Sigmoid colon (tissue), 7 donors: ENCODE measurements at regions of chr6 and their contacts with region 1.

Region 1: GRCh38 chr6:35240840-35241801 is 18.4 kb upstream of the ZNF76 start:
- DNase-seq: peak; percentile 82
- H3K4me3 ChIP-seq: no peak overlapping the region
- H3K27ac ChIP-seq: peak overlapping the region in 1 of 4 donors; percentile 14
- H3K4me1 ChIP-seq: peaks cover 0 to 39% (median 34%) of the 10 kb centered on the region in 4 donors
- H3K27me3 ChIP-seq: no peaks in the 10 kb centered on the region
- CTCF ChIP-seq: peak; percentile 84 to 97 (median 93)
- EP300 ChIP-seq: no peak
- POLR2A ChIP-seq: no peak

Region 2: GRCh38 chr6:34986845-34987246 is 254.3 kb before region 1 on chr6:
- intact Hi-C with region 1: loop called (anchors 5 kb)
- DNase-seq: peak; percentile 83
- H3K4me3 ChIP-seq: no peak overlapping the region
- H3K27ac ChIP-seq: peak overlapping the region in 3 of 4 donors; percentile 7 to 36 (median 16)
- H3K4me1 ChIP-seq: peaks cover 0 to 28% (median 16%) of the 10 kb centered on the region in 4 donors
- H3K27me3 ChIP-seq: no peaks in the 10 kb centered on the region
- CTCF ChIP-seq: peak; percentile 78 to 88 (median 84)
- EP300 ChIP-seq: no peak
- POLR2A ChIP-seq: no peak

Region 3: GRCh38 chr6:35146453-35146852 is 94.7 kb before region 1 on chr6:
- intact Hi-C with region 1: loop called (anchors 1 kb)
- DNase-seq: no peak
- H3K4me3 ChIP-seq: no peak overlapping the region
- H3K27ac ChIP-seq: no peak overlapping the region
- H3K4me1 ChIP-seq: peaks cover 0 to 17% (median 6%) of the 10 kb centered on the region in 4 donors
- H3K27me3 ChIP-seq: no peaks in the 10 kb centered on the region
- CTCF ChIP-seq: peak in 3 of 4 experiments; percentile 34 to 60 (median 57)
- EP300 ChIP-seq: no peak
- POLR2A ChIP-seq: no peak

Region 4: GRCh38 chr6:35181933-35182612 is 59.0 kb before region 1 on chr6:
- intact Hi-C with region 1: no loop called
- DNase-seq: peak; percentile 83
- H3K4me3 ChIP-seq: peak overlapping the region in 2 of 4 donors; percentile 9 to 17
- H3K27ac ChIP-seq: peak overlapping the region in 3 of 4 donors; percentile 33 to 68 (median 37)
- H3K4me1 ChIP-seq: peaks cover 0 to 38% (median 26%) of the 10 kb centered on the region in 4 donors
- H3K27me3 ChIP-seq: no peaks in the 10 kb centered on the region
- CTCF ChIP-seq: no peak
- EP300 ChIP-seq: no peak
- POLR2A ChIP-seq: no peak

Region 5: DNA sequence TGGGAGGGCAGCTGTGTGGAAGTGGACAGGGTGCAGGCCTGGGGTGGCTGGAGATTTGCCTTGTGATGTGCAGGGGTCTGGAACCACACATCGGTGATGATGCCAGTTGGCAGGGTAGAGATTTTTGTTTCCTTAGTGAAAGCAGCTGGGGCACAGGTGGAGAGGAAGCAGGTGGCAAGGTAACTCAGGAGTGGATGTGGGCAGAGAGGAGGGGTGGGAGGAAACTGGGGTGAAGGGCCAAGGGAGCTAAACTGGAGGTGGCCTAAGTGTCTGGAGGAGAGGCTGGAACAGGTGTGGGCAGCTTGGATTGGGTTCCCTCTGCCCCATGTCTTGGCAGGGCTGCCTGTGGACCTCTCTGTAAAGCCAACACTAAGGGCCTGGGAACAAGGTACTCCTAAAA is 32.0 kb before region 1 on chr6:
- intact Hi-C with region 1: loop called (anchors 5 kb)
- DNase-seq: no peak
- H3K4me3 ChIP-seq: no peak overlapping the region
- H3K27ac ChIP-seq: no peak overlapping the region
- H3K4me1 ChIP-seq: peaks cover 0 to 13% (median 11%) of the 10 kb centered on the region in 4 donors
- H3K27me3 ChIP-seq: peaks cover 0 to 35% (median 6%) of the 10 kb centered on the region in 3 donors
- CTCF ChIP-seq: no peak
- EP300 ChIP-seq: no peak
- POLR2A ChIP-seq: no peak